Heart right ventricle (tissue), 16 donors: ENCODE measurements at regions of chr16 and their contacts with region 1.

Region 1: DNA sequence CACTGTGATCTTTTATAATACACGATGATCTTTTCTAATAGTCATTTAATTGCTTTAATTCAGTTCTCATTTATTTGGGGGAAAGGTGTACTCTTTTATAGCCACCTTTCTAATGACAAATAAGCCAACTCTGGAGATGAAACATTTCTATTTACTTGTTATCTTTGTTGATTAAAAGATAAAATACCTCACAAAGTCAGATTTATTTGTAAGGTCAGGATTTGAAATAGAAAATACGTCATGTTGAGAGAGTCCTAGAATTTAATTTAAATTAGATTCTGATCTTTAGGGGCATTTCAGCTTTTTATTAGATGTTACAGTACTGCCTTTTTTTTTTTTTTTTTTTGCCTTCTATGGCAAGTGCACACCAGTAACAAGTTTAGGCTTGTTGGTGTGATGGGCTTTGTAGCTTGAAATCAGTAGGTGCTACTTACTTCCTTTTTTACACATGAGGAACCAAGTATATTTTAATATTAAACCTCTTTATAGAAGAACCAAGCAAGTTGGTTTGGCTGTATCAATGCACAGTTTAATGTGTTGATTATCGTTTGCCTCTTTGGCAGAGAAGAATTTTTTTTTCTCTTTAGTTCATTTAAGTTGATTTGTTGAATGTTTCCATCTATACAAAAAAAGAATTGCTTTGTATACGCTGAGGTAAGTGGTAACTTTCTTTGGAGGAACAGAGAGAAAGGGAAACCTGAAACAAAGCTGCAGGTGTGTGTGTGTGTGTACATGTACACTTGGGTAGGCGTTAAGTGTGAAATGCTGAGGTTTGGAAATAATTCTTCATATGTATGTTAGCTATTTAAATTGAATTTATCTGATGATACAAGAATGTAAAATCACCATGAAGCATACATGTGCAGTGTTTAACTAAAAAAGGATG is 15.6 kb downstream of the RBL2 start:
- DNase-seq: no peak
- ATAC-seq: no peak
- H3K4me3 ChIP-seq: no peak overlapping the region
- H3K27ac ChIP-seq: no peak overlapping the region
- H3K4me1 ChIP-seq: peaks cover 0 to 6% (median 0%) of the 10 kb centered on the region in 9 donors
- H3K27me3 ChIP-seq: no peaks in the 10 kb centered on the region
- CTCF ChIP-seq: no peak

Region 2: DNA sequence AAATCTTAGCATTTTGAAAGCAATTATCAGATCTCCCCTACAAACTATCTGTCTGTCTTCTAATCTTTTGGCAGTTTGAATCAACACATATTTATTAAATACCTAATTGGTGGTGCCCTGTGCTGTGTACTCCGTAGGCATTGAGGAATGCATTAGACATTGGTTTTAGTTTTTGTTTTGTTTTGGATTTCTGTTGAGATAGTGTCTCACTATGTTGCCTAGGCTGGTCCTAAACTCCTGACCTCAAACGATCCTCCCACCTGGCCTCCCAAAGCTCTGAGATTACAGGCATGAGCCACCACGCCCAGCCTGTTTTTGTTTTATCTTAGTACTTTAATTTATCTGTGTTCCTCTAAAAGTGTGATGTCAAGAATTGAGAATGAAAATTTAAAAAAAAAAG is 140.4 kb before region 1 on chr16:
- intact Hi-C with region 1: no loop called
- DNase-seq: no peak
- ATAC-seq: no peak
- H3K4me3 ChIP-seq: no peak overlapping the region
- H3K27ac ChIP-seq: no peak overlapping the region
- H3K4me1 ChIP-seq: peaks cover 0 to 4% (median 0%) of the 10 kb centered on the region in 9 donors
- H3K27me3 ChIP-seq: no peaks in the 10 kb centered on the region
- CTCF ChIP-seq: no peak

Region 3: DNA sequence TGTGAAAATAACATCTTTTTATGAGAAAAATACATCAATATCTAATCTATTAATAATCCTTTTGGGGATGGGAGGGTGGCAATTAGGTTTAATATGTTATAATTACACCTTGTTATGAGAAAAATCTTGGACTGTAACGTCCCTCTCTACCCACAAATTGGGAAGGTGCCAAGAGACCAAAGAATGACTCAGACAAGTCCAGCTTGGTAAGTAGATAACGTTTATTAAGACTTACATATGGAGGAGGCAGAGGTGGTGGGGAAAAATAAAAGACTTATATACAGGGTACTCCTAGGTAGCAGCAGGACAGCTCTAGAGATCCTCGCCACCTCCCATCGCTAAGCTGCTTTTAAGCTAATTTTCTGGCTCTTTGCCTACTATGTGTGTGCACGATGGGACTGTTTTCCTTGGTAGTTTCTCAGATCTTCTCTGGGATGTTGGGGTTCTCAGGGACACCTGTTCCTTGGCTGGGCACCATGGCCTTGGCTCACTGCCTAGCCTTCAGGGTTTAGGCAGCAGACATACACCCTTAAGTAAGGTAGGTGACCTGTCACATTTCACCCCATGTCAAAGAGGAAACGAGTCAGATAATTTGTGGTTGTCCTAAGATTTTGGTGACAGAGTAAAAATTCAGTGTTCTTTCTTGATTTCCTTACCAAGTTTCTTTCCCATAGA is 15.9 kb after region 1 on chr16:
- intact Hi-C with region 1: no loop called
- DNase-seq: no peak
- ATAC-seq: no peak
- H3K4me3 ChIP-seq: no peak overlapping the region
- H3K27ac ChIP-seq: no peak overlapping the region
- H3K4me1 ChIP-seq: peaks cover 0 to 9% (median 0%) of the 10 kb centered on the region in 9 donors
- H3K27me3 ChIP-seq: no peaks in the 10 kb centered on the region
- CTCF ChIP-seq: no peak

Region 4: GRCh38 chr16:53495325-53495724 is 45.5 kb after region 1 on chr16:
- intact Hi-C with region 1: loop called in 1 of 10 experiments (anchors 10 kb)
- DNase-seq: no peak
- ATAC-seq: no peak
- H3K4me3 ChIP-seq: no peak overlapping the region
- H3K27ac ChIP-seq: no peak overlapping the region
- H3K4me1 ChIP-seq: peaks cover 0 to 7% (median under 1%) of the 10 kb centered on the region in 9 donors
- H3K27me3 ChIP-seq: no peaks in the 10 kb centered on the region
- CTCF ChIP-seq: no peak